Activated T-helper 2 cell treated with anti-CD3 and anti-CD28 coated beads, Interferon-gamma antibody, Interleukin-2, Interleukin-4, amounts not matched to agents 10 μg/mL and 5 μg/mL and 100 μg/mL, durations not matched to agents 14 hours and 24 hours and 36 hours (primary cell): ENCODE measurements at regions of chrX and their contacts with region 1.

Region 1: DNA sequence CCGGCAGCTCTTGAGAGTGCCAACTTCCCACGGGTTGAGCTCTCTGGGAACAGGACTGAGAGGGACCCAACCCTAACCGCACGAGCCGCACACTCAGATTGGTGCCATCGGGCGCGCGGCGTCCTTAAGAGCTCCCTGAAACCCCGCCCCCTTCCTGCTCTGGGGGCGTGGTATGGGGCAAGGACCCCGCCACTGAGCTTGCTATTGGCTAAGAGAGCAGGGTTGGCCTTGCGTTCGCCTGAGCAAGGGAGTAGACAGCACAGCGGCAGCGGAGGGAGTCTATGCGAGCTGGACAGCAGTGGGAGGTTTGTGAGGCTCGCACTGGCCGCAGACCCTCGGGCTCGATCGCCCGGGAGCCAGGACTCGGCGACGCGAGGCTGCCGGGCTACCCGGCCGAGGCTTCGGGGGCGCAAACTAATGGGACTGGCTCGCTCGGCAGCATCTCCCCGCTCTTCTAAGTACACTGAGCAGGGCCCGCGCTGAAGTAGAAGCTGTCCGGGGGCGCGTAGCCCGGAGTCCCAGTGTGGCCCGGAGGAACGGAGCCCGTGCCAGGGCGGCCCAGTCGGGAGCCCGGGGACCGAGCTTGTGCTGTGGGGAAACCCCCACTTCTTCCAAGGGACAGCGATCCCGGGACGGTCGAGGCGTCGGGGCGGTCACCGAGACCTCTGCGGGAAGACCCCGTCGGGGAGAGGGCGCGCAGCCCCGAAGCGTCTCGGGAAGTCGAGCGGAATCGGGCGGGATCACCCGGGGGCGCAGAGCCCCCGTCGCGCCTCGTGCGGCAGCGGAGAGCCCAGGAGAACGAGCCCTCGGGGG is at the start of gene EFNB1:
- DNase-seq: peak; percentile 80
- H3K4me3 Mint-ChIP-seq: peak within 1 kb of the TSS; percentile 81
- H3K27ac Mint-ChIP-seq: peak within 1 kb of the TSS; percentile 14
- H3K4me1 Mint-ChIP-seq: peaks cover 16% of the 10 kb centered on the region
- H3K27me3 Mint-ChIP-seq: peaks cover 5% of the 10 kb centered on the region
- total RNA-seq, gene EFNB1: 7.4 and 7.6 TPM in 2 replicates

Region 2: GRCh38 chrX:68672581-68673318 is 156.2 kb before region 1 on chrX:
- intact Hi-C with region 1: no loop called
- DNase-seq: no peak
- H3K4me3 Mint-ChIP-seq: no peak overlapping the region
- H3K27ac Mint-ChIP-seq: no peak overlapping the region
- H3K4me1 Mint-ChIP-seq: no peaks in the 10 kb centered on the region
- H3K27me3 Mint-ChIP-seq: no peaks in the 10 kb centered on the region

Region 3: DNA sequence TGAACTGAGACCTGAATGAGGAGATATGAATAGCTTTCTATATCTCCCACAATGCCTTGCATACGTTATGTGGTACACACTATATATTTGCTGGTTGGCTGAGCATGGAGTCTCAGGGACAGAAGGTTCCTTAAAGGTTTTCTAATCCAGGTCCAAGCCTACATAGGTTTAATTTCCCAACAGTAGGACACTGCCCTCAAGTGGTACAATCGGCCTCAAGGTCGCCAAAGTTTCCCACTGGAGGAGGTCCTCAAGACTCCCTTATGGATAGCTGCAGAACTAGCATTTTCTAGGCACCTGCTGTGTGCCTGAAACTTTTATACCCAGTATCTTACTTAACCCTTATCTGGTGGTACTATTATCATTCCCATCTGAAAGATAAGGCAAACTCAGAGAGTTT is 21.1 kb before region 1 on chrX:
- intact Hi-C with region 1: no loop called
- DNase-seq: no peak
- H3K4me3 Mint-ChIP-seq: no peak overlapping the region
- H3K27ac Mint-ChIP-seq: no peak overlapping the region
- H3K4me1 Mint-ChIP-seq: no peaks in the 10 kb centered on the region
- H3K27me3 Mint-ChIP-seq: peaks cover 12% of the 10 kb centered on the region

Region 4: GRCh38 chrX:68894513-68895340 is 65.8 kb after region 1 on chrX:
- intact Hi-C with region 1: no loop called
- DNase-seq: no peak
- H3K4me3 Mint-ChIP-seq: no peak overlapping the region
- H3K27ac Mint-ChIP-seq: no peak overlapping the region
- H3K4me1 Mint-ChIP-seq: no peaks in the 10 kb centered on the region
- H3K27me3 Mint-ChIP-seq: no peaks in the 10 kb centered on the region

Region 5: GRCh38 chrX:68922042-68922441 is 93.1 kb after region 1 on chrX:
- intact Hi-C with region 1: no loop called
- DNase-seq: no peak
- H3K4me3 Mint-ChIP-seq: no peak overlapping the region
- H3K27ac Mint-ChIP-seq: no peak overlapping the region
- H3K4me1 Mint-ChIP-seq: no peaks in the 10 kb centered on the region
- H3K27me3 Mint-ChIP-seq: no peaks in the 10 kb centered on the region

Region 6: DNA sequence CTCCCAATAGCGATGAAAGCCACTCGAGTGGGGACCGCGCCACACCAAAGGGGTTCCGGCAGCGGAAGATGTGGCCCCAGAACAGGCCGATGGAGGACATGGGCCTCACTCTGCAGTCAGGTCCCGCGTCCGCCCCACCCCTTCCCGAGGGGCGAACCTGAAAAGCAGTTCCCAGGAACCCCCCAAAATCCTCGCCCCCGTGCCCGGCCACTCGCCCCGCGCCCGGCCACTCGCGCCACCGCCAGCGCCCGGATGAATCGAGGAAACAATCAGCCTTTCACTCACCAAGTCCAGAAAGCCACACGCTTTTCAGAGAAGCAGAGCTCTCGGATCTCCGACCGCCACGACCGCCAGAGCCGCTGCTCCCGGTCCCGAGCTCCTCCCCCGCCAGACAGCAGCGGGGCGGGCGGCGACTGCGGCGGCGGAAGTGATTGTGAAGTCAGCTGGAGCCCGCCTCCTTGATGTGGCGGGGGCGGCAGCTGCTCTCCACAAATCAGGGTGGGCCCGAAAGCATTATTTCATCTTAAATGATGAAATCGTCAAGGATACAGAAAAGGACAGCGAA is 336.2 kb after region 1 on chrX and contains the start of gene PJA1:
- intact Hi-C with region 1: loop called (anchors 2 kb)
- DNase-seq: peak; percentile 56
- H3K4me3 Mint-ChIP-seq: peak within 1 kb of the TSS; percentile 81
- H3K27ac Mint-ChIP-seq: peak within 1 kb of the TSS; percentile 83
- H3K4me1 Mint-ChIP-seq: peaks cover 21% of the 10 kb centered on the region
- H3K27me3 Mint-ChIP-seq: peaks cover 13% of the 10 kb centered on the region
- total RNA-seq, gene PJA1: 17.2 and 18.1 TPM in 2 replicates

Region 7: GRCh38 chrX:69222103-69223090 is 393.5 kb after region 1 on chrX:
- intact Hi-C with region 1: loop called (anchors 2 kb)
- DNase-seq: peak; percentile 46
- H3K4me3 Mint-ChIP-seq: no peak overlapping the region
- H3K27ac Mint-ChIP-seq: no peak overlapping the region
- H3K4me1 Mint-ChIP-seq: no peaks in the 10 kb centered on the region
- H3K27me3 Mint-ChIP-seq: peaks cover 2% of the 10 kb centered on the region

Region 8: DNA sequence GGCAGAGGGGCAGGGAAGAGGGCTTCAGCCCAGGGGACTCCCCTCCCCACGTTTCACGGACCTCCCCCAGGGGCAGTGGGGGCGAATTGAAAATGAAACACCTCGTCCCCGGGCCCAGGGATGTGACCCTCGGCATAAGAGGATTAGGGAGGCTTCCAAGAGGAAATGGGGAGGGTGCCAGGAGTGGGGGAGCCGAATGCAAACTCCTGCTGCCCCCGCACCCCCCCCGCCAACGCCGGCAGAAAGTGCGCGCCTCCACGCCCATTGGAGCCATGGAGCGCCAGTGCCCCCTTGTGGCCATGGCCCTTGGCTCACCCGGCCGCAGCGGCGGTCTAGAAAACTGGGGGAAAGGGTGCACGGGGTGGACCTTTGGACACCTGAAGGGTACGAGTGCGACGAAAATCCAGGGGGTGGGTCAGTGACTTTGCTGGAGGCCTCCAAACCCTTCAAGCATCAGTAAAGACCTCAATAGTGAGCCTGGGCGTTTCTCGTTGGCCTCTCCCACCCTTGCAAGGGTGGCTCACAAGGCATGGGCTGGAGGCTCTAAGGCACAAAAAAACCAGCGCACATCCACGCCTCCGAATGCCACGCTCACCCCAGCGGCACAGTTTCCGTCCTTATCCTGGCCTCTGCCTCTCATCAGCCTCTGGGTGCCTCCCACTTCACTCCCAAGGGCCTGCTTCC is 457.1 kb after region 1 on chrX:
- intact Hi-C with region 1: loop called (anchors 2 kb)
- DNase-seq: peak; percentile 13
- H3K4me3 Mint-ChIP-seq: no peak overlapping the region
- H3K27ac Mint-ChIP-seq: no peak overlapping the region
- H3K4me1 Mint-ChIP-seq: no peaks in the 10 kb centered on the region
- H3K27me3 Mint-ChIP-seq: peaks cover 1% of the 10 kb centered on the region

Region 9: DNA sequence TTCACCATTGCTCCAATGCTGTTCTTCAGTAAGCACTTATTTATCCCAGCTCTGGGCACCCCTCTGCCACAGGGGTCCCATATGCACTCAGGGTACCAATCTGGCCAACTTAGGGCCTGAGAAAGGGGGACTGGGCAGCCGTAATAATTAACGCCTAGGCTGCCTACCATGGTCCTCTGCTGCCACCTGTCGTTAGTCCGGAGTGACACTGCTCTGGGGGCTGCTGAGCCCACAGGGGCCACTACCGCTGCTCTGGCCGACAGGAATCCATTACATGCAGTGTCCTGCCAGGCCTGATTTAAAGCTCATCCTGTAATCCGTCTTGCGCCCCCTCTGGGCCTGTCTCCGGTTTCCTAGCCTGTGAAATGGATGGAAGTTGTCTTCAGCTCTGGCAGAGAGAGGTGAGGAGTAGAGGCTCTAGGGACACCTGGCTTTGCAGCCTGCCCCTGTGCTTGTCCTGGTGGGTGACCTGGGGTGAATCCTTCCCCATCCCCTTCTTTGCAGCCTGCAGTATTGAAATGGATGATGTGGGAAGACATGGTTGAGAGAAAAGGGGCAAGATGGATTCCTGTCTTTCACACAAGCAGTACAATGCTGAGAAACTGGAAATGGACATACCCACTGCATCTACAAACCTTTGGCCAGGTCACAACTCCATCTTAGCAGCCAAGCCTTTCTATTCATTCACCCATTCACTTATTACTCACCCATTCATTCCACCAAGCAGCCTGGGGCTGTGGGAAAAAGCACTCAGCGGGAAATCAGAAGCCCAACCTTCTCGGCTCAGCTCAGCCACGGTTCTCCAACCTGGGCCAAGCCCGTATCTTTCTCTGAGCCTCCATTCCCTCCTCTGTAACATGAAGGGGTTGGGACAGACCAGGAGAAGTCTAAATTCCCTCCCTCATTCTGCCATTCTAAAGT is 558.9 kb after region 1 on chrX:
- intact Hi-C with region 1: loop called (anchors 5 kb)
- DNase-seq: no peak
- H3K4me3 Mint-ChIP-seq: no peak overlapping the region
- H3K27ac Mint-ChIP-seq: no peak overlapping the region
- H3K4me1 Mint-ChIP-seq: no peaks in the 10 kb centered on the region
- H3K27me3 Mint-ChIP-seq: no peaks in the 10 kb centered on the region